H1 (cell line): ENCODE measurements at regions of chr1 and their contacts with region 1.

Region 1: DNA sequence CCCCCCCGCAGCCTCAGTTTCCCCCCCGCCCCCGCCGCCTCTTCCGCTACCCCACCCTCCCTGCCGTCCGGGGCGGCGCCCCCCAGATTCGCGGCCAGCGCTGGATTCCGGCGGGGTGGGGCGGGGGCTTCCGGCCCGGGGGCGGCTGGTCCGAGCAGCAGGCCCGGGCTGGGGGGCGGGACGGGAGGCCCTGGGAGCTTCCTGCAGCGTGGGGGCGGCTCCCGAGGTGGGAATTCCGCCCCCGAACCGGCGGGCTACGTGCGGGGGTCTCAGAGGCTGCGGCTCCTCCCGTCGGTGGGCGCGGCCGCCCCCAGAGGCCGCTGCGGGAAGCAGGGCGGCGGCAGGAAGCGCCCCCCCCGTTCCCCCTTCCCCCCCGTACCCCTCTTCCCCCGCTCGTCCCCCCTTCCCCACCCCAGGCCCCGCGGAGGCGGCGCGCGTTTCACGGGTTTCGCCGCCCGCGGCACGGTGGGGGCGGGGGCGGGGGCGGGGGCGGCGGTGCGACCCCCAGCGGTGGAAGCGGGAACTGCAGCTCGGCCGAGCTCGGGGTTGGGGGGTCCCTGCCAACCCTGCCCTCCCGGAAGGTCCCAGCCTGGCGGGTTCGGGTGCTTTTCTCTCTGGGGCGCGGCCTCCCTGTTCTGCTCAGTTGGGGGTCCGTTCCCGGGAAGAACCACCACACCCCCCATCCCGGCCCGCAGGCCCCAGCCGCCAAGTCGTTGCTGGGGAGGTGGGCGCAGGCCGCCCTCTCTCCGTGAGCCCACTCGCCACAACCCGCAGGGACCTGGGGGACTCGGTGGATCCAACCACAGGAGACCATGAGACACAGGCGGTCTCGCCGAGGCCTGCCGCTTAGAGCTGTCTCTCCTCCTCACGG is 76.3 kb downstream of the MORN1 start:
- DNase-seq: peak in 1 of 2 experiments; percentile 76
- H3K4me3 ChIP-seq: peak overlapping the region in 3 of 4 experiments; percentile 19 to 53 (median 36); a peak in 4 of 8 replicates
- H3K27ac ChIP-seq: peak overlapping the region; percentile 34; the same call in 1 of the 2 replicates
- H3K4me1 ChIP-seq: peaks cover 7 to 43% (median 30%) of the 10 kb centered on the region in 4 experiments
- H3K27me3 ChIP-seq: no peaks in the 10 kb centered on the region
- CTCF ChIP-seq: peak in 2 of 3 experiments; percentile 21 to 40; a peak in 2 of 4 replicates
- EP300 ChIP-seq: no peak
- POLR2A ChIP-seq: no peak
- RAD21 ChIP-seq: peak in 1 of 2 experiments; percentile 4; a peak in 1 of 4 replicates

Region 2: DNA sequence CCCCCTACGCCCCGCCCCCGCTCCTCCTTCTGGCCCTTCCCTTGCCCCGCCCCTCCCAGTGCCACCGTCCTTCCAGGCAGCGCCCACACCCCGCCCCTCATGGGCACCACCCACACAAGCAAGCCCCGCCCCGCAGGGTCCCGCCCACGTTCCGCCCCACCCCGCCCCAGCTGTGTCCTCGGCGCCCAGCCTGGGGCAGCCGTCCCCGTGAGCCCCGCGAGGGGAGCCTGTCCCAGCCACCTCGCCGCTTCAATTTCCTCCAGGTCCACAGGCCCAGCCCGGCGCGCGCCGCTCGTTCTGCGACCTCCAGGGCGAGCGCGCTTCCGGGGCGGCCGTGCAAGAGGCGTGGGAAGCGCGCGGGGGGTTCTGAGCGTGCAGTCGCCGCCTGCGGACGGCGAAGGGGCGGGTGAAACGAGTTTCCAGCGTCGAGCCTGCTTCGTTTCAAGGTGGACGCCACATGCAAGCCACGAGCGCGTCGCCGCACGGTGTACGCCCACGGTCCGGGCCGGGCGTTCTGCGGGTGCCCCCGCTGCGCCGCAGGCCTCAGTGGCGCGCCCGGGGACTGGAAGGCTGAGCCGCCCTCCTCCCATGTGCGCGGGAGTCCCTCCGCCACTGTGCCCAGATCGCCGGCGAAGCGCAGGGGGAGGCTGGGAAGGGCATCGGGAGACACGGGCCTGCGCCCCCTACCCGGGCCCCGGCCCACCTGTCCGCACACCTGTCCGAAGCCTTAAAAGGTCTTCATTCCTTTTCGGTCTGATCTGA is 109.7 kb before region 1 on chr1:
- CTCF ChIA-PET with region 1: interaction called, 11 read pairs
- POLR2A ChIA-PET with region 1: interaction called, 4 read pairs
- DNase-seq: peak; percentile 80 to 98
- H3K4me3 ChIP-seq: peak overlapping the region; percentile 30 to 68 (median 38)
- H3K27ac ChIP-seq: no peak overlapping the region
- H3K4me1 ChIP-seq: peaks cover 3 to 16% (median 9%) of the 10 kb centered on the region in 4 experiments
- H3K27me3 ChIP-seq: peaks cover 0 to 11% (median 6%) of the 10 kb centered on the region in 4 experiments; a peak in 4 of 7 replicates
- CTCF ChIP-seq: no peak
- EP300 ChIP-seq: no peak
- POLR2A ChIP-seq: peak in 1 of 2 experiments; percentile 17; a peak in 1 of 3 replicates
- RAD21 ChIP-seq: no peak

Region 3: DNA sequence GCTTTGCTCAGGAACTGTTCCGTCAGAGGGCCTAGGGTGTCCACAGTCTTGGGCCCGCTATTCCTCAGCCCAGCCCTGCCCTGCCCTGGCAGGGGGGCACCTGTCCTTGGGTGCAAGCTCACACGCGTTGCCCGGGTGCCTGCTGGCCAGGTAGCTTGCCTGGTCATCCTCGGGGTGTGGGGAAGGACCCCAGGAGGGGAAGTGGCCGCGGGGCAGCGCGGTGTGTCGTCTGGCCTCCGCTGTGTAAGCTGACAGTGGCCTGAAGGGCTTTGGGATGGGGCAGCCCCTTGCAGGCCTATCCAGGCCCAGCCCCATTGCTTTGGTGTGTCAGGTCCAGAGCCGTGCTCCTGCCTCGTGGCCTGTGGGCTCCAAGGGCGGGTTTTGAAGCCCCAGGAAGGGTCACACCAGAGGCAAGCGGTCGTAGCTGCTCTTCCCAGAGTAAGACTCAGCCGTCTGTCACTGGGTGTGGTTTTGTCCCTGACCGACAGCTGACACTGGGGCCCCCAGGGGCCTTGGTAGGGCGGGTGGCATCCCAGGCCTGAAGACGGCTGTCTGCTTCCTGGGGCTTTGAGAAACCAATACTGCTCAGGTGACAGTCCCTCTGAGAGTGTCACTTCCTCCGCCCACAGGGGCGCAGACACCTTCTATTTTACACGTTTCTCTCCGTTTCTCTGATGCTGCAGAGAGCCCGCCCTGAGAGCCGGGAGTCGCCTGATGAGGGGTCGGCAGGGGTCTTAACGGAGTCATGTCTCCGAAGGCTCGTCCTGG is 14.8 kb before region 1 on chr1:
- CTCF ChIA-PET with region 1: interaction called, 11 read pairs
- POLR2A ChIA-PET with region 1: interaction called, 5 read pairs
- DNase-seq: no peak
- H3K4me3 ChIP-seq: no peak overlapping the region
- H3K27ac ChIP-seq: no peak overlapping the region
- H3K4me1 ChIP-seq: peaks cover 0 to 3% (median 0%) of the 10 kb centered on the region in 4 experiments; a peak in 2 of 7 replicates
- H3K27me3 ChIP-seq: no peaks in the 10 kb centered on the region
- CTCF ChIP-seq: no peak
- EP300 ChIP-seq: no peak
- POLR2A ChIP-seq: no peak
- RAD21 ChIP-seq: no peak

Region 4: DNA sequence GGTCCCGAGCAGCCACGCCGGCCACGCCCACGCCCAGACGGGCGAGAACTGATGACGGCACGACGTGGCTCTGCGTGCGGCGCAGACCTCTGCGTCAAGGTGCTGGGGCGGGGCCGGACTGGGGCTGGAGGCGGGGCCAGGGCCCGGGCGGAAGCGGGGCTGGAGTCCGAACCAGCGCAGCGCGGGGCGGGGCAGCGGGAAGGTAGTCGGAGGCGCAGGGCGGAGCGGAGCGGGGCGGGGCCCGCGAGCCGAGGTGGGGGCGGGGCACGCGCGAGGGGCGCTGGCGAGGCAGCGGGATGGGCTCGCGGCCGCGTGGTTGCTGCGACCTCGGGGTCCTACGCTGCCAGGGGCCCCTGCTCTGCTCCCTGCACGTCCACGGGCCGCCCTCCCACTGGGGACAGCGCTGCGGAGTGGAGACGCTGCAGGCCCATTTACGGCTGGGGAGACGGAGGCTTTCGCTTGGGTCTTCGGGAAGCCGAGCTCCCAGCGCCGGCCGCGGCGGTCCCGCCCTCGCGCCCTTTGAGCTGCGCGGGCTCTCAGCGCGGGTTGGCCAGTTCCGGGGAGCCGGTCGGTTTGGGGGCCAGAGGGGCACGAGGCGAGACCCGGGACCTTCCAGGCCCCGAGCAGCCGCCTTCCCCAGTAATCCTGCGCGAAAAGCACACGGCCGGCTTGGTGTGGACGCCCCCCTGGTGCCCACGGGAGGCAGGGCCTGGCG is 97.6 kb after region 1 on chr1 and contains the start of gene PEX10:
- CTCF ChIA-PET with region 1: no interaction called
- POLR2A ChIA-PET with region 1: no interaction called
- DNase-seq: peak; percentile 81 to 99
- H3K4me3 ChIP-seq: peak within 1 kb of the TSS; percentile 60 to 92 (median 88)
- H3K27ac ChIP-seq: peak within 1 kb of the TSS; percentile 63; the same call in 1 of the 2 replicates
- H3K4me1 ChIP-seq: peaks cover 0 to 14% (median 11%) of the 10 kb centered on the region in 4 experiments; a peak in 5 of 7 replicates
- H3K27me3 ChIP-seq: no peaks in the 10 kb centered on the region
- CTCF ChIP-seq: no peak
- EP300 ChIP-seq: no peak
- POLR2A ChIP-seq: no peak; a peak in 2 of 3 replicates
- RAD21 ChIP-seq: no peak
- total RNA-seq, gene PEX10: 24.3 and 24.7 TPM in 2 replicates